CD4-positive, alpha-beta T cell (primary cell): ENCODE measurements at regions of chr7 and their contacts with region 1.

Region 1: GRCh38 chr7:99408379-99409191 is at the starts of genes BUD31 and PDAP1:
- DNase-seq: peak; percentile 90 to 98 (median 94)
- ATAC-seq: peak; percentile 86
- H3K4me3 ChIP-seq: peak within 1 kb of the TSS; percentile 99
- H3K4me3 Mint-ChIP-seq: peak within 1 kb of the TSS; percentile 93
- H3K27ac ChIP-seq: peak within 1 kb of the TSS; percentile 98 to 99
- H3K27ac Mint-ChIP-seq: peak within 1 kb of the TSS; percentile 87
- H3K4me1 ChIP-seq: peaks cover 55% of the 10 kb centered on the region
- H3K4me1 Mint-ChIP-seq: peaks cover 58% of the 10 kb centered on the region
- H3K27me3 ChIP-seq: no peaks in the 10 kb centered on the region
- H3K27me3 Mint-ChIP-seq: no peaks in the 10 kb centered on the region
- CTCF ChIP-seq: no peak
- total RNA-seq, gene BUD31: 147 to 153 TPM
- total RNA-seq, gene PDAP1: 35.0 to 38.0 TPM

Region 2: GRCh38 chr7:99143853-99144672 is 264.5 kb before region 1 on chr7 and contains the start of gene SMURF1:
- CTCF ChIA-PET with region 1: no interaction called
- POLR2A ChIA-PET with region 1: no interaction called
- intact Hi-C with region 1: loop called in 1 of 2 experiments (anchors 10 kb)
- DNase-seq: peak; percentile 52 to 93 (median 70)
- ATAC-seq: peak; percentile 42
- H3K4me3 ChIP-seq: peak within 1 kb of the TSS; percentile 88
- H3K4me3 Mint-ChIP-seq: peak within 1 kb of the TSS; percentile 96
- H3K27ac ChIP-seq: peak within 1 kb of the TSS; percentile 64 to 71
- H3K27ac Mint-ChIP-seq: peak within 1 kb of the TSS; percentile 96
- H3K4me1 ChIP-seq: peaks cover 28% of the 10 kb centered on the region
- H3K4me1 Mint-ChIP-seq: peaks cover 40% of the 10 kb centered on the region
- H3K27me3 ChIP-seq: no peaks in the 10 kb centered on the region
- H3K27me3 Mint-ChIP-seq: no peaks in the 10 kb centered on the region
- CTCF ChIP-seq: no peak
- total RNA-seq, gene SMURF1: 30.0 to 32.4 TPM

Region 3: DNA sequence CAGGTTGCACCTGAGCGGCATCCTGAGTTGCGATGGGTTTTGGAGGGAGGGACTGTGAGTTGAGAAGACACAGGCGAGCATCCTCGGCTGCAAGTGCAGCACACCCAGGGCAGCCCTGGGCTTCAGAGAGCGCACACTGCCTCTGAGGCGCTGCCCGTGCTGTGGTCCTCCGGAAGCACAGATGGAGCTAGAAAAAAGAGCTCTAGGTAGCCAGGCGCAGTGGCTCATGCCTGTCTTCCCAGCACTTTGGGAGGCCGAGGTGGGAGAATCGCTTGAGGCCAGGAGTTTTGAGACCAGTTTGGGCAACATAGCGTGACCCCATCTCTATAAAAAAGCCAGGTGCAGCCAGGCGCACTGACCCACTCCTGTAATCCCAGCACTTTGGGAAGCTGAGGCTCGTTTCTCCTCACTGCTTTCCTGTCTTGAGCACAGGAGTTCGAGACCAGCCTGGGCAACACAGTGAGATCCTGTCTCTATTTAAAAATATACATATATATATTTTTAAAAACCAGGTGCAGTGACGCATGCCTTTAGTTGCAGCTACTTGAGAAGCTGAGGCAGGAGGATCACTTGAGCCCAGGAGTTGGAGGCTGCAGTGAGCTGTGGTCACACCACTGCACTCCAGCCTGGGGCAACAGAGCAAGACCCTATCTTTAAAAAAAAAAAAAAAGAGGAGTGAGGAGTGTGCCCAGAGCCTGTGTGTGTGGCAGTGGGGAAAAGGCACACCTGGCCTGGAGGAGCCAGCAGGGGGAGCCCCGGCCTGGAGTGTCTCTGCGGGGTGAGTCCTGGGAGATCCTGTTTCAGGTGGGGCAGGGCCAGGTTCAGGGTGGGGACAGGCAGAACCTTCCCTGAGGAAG is 43.4 kb before region 1 on chr7:
- CTCF ChIA-PET with region 1: interaction called, 5 read pairs
- POLR2A ChIA-PET with region 1: interaction called, 4 read pairs
- intact Hi-C with region 1: loop called in 1 of 2 experiments (anchors 2 kb)
- DNase-seq: peak; percentile 56 to 82 (median 69)
- ATAC-seq: peak; percentile 97
- H3K4me3 ChIP-seq: no peak overlapping the region
- H3K4me3 Mint-ChIP-seq: no peak overlapping the region
- H3K27ac ChIP-seq: no peak overlapping the region
- H3K27ac Mint-ChIP-seq: no peak overlapping the region
- H3K4me1 ChIP-seq: peaks cover 7% of the 10 kb centered on the region
- H3K4me1 Mint-ChIP-seq: no peaks in the 10 kb centered on the region
- H3K27me3 ChIP-seq: no peaks in the 10 kb centered on the region
- H3K27me3 Mint-ChIP-seq: no peaks in the 10 kb centered on the region
- CTCF ChIP-seq: peak; percentile 73

Region 4: GRCh38 chr7:99380032-99380822 is 28.4 kb before region 1 on chr7:
- CTCF ChIA-PET with region 1: interaction called, 7 read pairs
- POLR2A ChIA-PET with region 1: interaction called, 39 read pairs
- intact Hi-C with region 1: loop called in 1 of 2 experiments (anchors 1 kb)
- DNase-seq: peak in 4 of 14 experiments; percentile 19 to 75 (median 72)
- ATAC-seq: peak; percentile 4
- H3K4me3 ChIP-seq: peak overlapping the region; percentile 55
- H3K4me3 Mint-ChIP-seq: peak overlapping the region; percentile 80
- H3K27ac ChIP-seq: peak overlapping the region; percentile 99
- H3K27ac Mint-ChIP-seq: peak overlapping the region; percentile 95
- H3K4me1 ChIP-seq: peaks cover 94% of the 10 kb centered on the region
- H3K4me1 Mint-ChIP-seq: peaks cover 61% of the 10 kb centered on the region
- H3K27me3 ChIP-seq: no peaks in the 10 kb centered on the region
- H3K27me3 Mint-ChIP-seq: no peaks in the 10 kb centered on the region
- CTCF ChIP-seq: no peak

Region 5: GRCh38 chr7:99438573-99439480 is 30.2 kb after region 1 on chr7 and contains the starts of genes CPSF4 and PTCD1:
- CTCF ChIA-PET with region 1: no interaction called
- POLR2A ChIA-PET with region 1: interaction called, 22 read pairs
- intact Hi-C with region 1: loop called in 1 of 2 experiments (anchors 2 kb)
- DNase-seq: peak; percentile 76 to 95 (median 86)
- ATAC-seq: peak; percentile 75
- H3K4me3 ChIP-seq: peak within 1 kb of the TSS; percentile 78
- H3K4me3 Mint-ChIP-seq: peak within 1 kb of the TSS; percentile 99
- H3K27ac ChIP-seq: peak within 1 kb of the TSS; percentile 69 to 80
- H3K27ac Mint-ChIP-seq: peak within 1 kb of the TSS; percentile 83
- H3K4me1 ChIP-seq: peaks cover 30% of the 10 kb centered on the region
- H3K4me1 Mint-ChIP-seq: peaks cover 31% of the 10 kb centered on the region
- H3K27me3 ChIP-seq: no peaks in the 10 kb centered on the region
- H3K27me3 Mint-ChIP-seq: no peaks in the 10 kb centered on the region
- CTCF ChIP-seq: no peak
- total RNA-seq, gene CPSF4: 28.1 to 31.7 TPM
- total RNA-seq, gene PTCD1: 4.8 to 5.3 TPM

Region 6: DNA sequence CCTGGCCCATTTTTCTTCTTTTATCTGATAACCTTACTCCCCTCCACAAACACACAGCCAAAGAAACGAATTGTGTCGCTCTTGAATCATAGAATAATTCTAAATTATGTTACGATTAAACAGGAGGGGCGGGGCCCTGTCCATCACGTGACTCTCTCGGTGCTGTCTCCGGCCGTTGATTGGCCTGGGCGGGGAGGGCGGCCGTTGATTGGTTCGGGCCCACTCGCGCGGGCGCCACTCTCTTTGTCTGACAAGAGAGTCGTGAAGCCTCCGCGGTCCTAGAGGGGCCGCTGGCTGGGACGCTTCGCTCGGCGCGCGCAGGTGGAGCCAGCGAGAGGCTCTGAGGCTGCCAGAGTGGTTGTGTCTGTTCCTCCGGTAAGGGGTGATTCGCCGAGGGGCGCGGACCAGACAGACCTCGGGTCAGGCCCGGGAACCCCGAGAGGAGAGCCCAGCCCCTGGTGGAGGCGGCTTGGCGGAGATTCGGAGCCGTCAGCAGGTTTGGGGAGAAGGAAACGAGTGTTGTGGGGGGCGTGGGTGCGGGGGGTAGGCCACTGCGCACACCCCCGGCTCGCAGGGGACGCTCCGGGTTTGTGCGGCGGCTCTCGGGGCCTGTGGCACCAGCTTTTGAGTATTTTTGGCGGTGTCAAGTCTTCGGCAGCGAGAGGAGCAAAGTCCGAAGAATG is 64.1 kb after region 1 on chr7 and contains the start of gene ZNF789:
- CTCF ChIA-PET with region 1: no interaction called
- POLR2A ChIA-PET with region 1: interaction called, 15 read pairs
- intact Hi-C with region 1: loop called (anchors 1 to 2 kb)
- DNase-seq: peak; percentile 97 to 98 (median 98)
- ATAC-seq: peak; percentile 95
- H3K4me3 ChIP-seq: peak within 1 kb of the TSS; percentile 75
- H3K4me3 Mint-ChIP-seq: peak within 1 kb of the TSS; percentile 95
- H3K27ac ChIP-seq: peak within 1 kb of the TSS; percentile 78 to 81
- H3K27ac Mint-ChIP-seq: peak within 1 kb of the TSS; percentile 90
- H3K4me1 ChIP-seq: peaks cover 38% of the 10 kb centered on the region
- H3K4me1 Mint-ChIP-seq: peaks cover 40% of the 10 kb centered on the region
- H3K27me3 ChIP-seq: no peaks in the 10 kb centered on the region
- H3K27me3 Mint-ChIP-seq: no peaks in the 10 kb centered on the region
- CTCF ChIP-seq: no peak
- total RNA-seq, gene ZNF789: 11.5 to 13.5 TPM

Region 7: GRCh38 chr7:99558306-99559174 is 150.0 kb after region 1 on chr7 and contains the start of gene ZNF655:
- CTCF ChIA-PET with region 1: no interaction called
- POLR2A ChIA-PET with region 1: interaction called, 24 read pairs
- intact Hi-C with region 1: no loop called
- DNase-seq: peak; percentile 83 to 96 (median 88)
- ATAC-seq: peak; percentile 79
- H3K4me3 ChIP-seq: peak within 1 kb of the TSS; percentile 98
- H3K4me3 Mint-ChIP-seq: peak within 1 kb of the TSS; percentile 93
- H3K27ac ChIP-seq: peak within 1 kb of the TSS; percentile 95 to 96
- H3K27ac Mint-ChIP-seq: peak within 1 kb of the TSS; percentile 95
- H3K4me1 ChIP-seq: peaks cover 45% of the 10 kb centered on the region
- H3K4me1 Mint-ChIP-seq: peaks cover 58% of the 10 kb centered on the region
- H3K27me3 ChIP-seq: no peaks in the 10 kb centered on the region
- H3K27me3 Mint-ChIP-seq: no peaks in the 10 kb centered on the region
- CTCF ChIP-seq: no peak
- total RNA-seq, gene ZNF655: 145 to 146 TPM